Adrenal gland (tissue), 19 donors: ENCODE measurements at regions of chr5 and their contacts with region 1.

Region 1: GRCh38 chr5:54517174-54518092 is at the start of gene SNX18:
- DNase-seq: peak; percentile 93 to 95 (median 93)
- H3K4me3 ChIP-seq: peak within 1 kb of the TSS; percentile 57 to 99 (median 76)
- H3K27ac ChIP-seq: peak within 1 kb of the TSS; percentile 53 to 97 (median 91)
- H3K4me1 ChIP-seq: peaks cover 20 to 41% of the 10 kb centered on the region in 2 donors
- H3K27me3 ChIP-seq: no peaks in the 10 kb centered on the region
- CTCF ChIP-seq: peak; percentile 85 to 99 (median 95)
- POLR2A ChIP-seq: peak; percentile 68 to 81
- total RNA-seq, gene SNX18: 18.9 to 89.4 (median 38.1) TPM

Region 2: DNA sequence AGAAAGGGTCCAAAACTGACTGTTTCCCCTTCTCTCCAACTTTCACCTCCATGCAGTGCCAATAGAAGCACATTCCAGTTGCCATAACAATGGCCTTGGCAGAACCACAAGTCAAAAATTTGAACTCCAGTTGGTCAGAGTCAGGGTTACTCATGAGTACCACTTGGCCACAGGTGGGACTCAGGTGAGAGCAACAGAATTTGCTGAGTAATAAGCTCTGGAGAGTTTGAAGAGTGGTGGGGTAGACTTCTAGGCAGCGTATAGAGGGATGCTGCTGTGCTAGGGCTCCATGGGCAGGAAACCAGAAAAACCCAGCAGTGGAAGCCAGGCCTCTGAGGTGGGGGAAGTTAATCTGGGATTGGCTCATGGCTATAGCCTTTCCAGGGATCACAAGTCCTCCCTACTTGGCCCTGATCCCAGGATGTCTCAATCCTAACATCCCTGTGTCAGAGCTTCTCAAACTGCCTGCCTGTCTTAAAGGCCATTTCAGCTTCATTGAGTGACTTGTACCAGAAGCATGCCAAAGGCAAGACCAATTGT is 30.3 kb after region 1 on chr5:
- intact Hi-C with region 1: no loop called
- DNase-seq: peak; percentile 56 to 88 (median 78)
- H3K4me3 ChIP-seq: no peak overlapping the region
- H3K27ac ChIP-seq: peak overlapping the region in 2 of 5 donors; percentile 52 to 55
- H3K4me1 ChIP-seq: peaks cover 15 to 41% of the 10 kb centered on the region in 2 donors
- H3K27me3 ChIP-seq: no peaks in the 10 kb centered on the region
- CTCF ChIP-seq: no peak
- POLR2A ChIP-seq: no peak

Region 3: GRCh38 chr5:54624805-54625561 is 107.5 kb after region 1 on chr5:
- intact Hi-C with region 1: no loop called
- DNase-seq: no peak
- H3K4me3 ChIP-seq: no peak overlapping the region
- H3K27ac ChIP-seq: no peak overlapping the region
- H3K4me1 ChIP-seq: no peaks in the 10 kb centered on the region
- H3K27me3 ChIP-seq: no peaks in the 10 kb centered on the region
- CTCF ChIP-seq: no peak
- POLR2A ChIP-seq: no peak

Region 4: DNA sequence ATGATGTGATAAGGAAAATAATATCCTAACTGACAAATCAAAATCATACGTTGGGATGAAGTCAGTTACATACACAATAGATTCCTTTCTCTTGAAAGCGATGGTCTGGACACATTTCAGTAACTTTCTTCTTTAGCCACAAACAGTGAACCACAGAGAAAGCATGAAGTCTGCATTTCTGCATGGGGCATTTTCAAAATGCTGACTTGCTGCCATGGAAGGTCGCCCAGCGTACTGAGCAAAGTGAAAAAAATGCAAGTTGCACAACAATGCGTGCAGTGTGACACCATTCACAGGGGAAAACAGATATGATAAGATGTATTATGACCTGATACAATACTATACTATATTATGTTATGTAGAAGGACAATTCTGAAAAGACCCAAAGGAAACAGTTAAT is 146.4 kb after region 1 on chr5:
- intact Hi-C with region 1: loop called in 1 of 2 experiments (anchors 10 kb)
- DNase-seq: peak in 6 of 7 donors; percentile 56 to 76 (median 68)
- H3K4me3 ChIP-seq: no peak overlapping the region
- H3K27ac ChIP-seq: peak overlapping the region in 1 of 5 donors; percentile 50
- H3K4me1 ChIP-seq: peaks cover 0 to 13% of the 10 kb centered on the region in 2 donors
- H3K27me3 ChIP-seq: no peaks in the 10 kb centered on the region
- CTCF ChIP-seq: no peak
- POLR2A ChIP-seq: no peak

Region 5: DNA sequence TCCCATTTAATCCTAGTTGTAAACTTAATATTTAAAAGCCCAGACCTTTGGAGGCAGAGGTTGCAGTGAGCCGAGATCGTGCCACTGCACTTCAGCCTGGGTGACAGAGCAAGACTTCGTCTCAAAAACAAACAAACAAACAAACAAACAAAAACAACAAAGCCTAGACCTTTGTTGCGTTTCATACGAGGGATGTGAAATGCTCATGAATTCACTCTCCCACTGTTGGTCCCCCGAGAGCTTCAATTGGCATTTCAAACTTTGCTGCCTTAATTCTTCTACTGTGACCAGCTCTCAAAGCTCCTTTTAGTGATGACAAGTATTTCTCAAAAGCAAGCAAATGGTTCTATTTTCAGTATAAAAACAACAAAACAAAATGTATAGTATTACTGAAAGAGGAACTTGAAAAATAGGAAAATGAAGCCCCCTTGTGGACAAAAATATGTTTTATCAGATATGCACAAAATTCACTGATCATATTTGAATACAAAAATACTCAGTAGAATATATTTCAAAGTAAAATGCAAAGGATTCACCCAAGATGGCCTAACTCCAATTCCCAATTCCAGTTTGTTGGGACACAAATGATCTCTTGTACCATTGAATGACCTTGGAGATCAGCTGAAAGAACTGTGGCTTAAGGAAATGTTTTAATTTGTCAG is 327.6 kb after region 1 on chr5:
- intact Hi-C with region 1: loop called (anchors 2 to 5 kb)
- DNase-seq: no peak
- H3K4me3 ChIP-seq: peak overlapping the region in 1 of 4 donors; percentile 18
- H3K27ac ChIP-seq: no peak overlapping the region
- H3K4me1 ChIP-seq: peaks cover 0 to 5% of the 10 kb centered on the region in 2 donors
- H3K27me3 ChIP-seq: no peaks in the 10 kb centered on the region
- CTCF ChIP-seq: peak; percentile 49 to 78 (median 76)
- POLR2A ChIP-seq: no peak

Region 6: GRCh38 chr5:54852007-54852406 is 334.6 kb after region 1 on chr5:
- intact Hi-C with region 1: loop called in 1 of 2 experiments (anchors 5 kb)
- DNase-seq: no peak
- H3K4me3 ChIP-seq: no peak overlapping the region
- H3K27ac ChIP-seq: no peak overlapping the region
- H3K4me1 ChIP-seq: no peaks in the 10 kb centered on the region
- H3K27me3 ChIP-seq: no peaks in the 10 kb centered on the region
- CTCF ChIP-seq: no peak
- POLR2A ChIP-seq: no peak

Region 7: GRCh38 chr5:54867310-54867944 is 350.0 kb after region 1 on chr5:
- intact Hi-C with region 1: loop called in 1 of 2 experiments (anchors 5 kb)
- DNase-seq: no peak
- H3K4me3 ChIP-seq: peak overlapping the region in 1 of 4 donors; percentile 16
- H3K27ac ChIP-seq: no peak overlapping the region
- H3K4me1 ChIP-seq: no peaks in the 10 kb centered on the region
- H3K27me3 ChIP-seq: no peaks in the 10 kb centered on the region
- CTCF ChIP-seq: peak; percentile 56 to 75 (median 68)
- POLR2A ChIP-seq: no peak

Region 8: DNA sequence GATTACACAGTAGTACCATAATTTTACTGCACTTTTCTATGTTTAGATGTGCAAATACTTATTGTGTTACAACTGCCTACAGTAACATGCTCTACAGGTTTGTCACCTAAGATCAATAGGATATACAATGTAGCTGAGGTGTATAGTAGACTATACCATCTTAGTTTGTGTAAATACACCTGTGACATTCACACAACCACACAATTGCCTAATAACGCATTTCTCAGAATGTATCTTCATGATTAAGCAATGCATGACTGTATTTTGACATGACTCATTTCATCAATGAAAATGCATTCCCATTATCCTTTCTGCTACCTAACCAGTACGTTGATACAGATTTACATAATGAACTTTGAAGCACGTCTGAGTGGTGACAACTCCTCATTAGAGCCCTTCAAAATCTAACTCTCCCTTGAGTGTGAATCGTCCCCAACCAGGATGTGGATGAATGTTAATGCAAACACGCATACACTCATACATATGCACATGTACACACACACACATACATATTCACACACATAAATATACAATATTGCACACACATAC is 535.0 kb after region 1 on chr5:
- intact Hi-C with region 1: no loop called
- DNase-seq: no peak
- H3K4me3 ChIP-seq: no peak overlapping the region
- H3K27ac ChIP-seq: no peak overlapping the region
- H3K4me1 ChIP-seq: no peaks in the 10 kb centered on the region
- H3K27me3 ChIP-seq: no peaks in the 10 kb centered on the region
- CTCF ChIP-seq: no peak
- POLR2A ChIP-seq: no peak